Activated T-helper 2 cell treated with anti-CD3 and anti-CD28 coated beads, Interferon-gamma antibody, Interleukin-2, Interleukin-4, amounts not matched to agents 10 μg/mL and 5 μg/mL and 100 μg/mL, durations not matched to agents 14 hours and 24 hours and 36 hours (primary cell): ENCODE measurements at regions of chr16 and their contacts with region 1.

Region 1: DNA sequence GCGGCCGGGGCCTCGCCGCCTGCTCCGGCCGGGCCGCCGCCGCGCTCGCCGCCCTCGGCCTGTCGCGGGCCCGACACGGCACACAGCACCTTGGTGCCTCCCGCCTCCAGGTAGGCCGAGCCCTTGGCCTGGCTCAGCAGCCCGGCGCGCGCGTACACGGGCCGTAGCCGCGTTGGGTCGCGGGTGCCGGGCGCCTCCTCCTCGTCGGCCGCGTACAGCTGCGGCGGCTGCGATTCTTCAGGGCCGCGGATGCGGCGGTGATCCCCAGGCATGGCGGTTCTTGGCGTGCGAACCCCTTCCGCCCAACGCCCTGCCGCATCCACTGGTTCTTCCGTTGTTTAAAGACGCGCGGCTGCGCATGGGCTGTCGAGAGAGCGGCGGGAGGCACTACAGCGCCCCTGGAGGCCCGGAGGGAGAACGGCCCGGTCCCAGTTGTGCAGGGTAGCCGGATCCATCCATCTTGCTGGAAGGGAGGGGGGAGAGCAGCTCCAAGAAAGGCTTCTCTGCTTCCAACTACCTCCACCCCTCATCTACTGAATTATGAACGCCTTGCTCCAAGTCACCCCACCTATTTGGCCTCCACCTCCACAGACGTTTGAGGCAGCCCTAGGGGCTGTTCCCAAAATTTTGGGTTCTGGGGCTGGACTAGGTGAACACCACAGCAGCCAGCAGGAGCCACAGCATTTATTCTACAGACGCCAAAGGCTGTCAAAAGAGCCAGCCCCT is at the start of gene EXOSC6:
- DNase-seq: peak; percentile 92
- H3K4me3 Mint-ChIP-seq: peak within 1 kb of the TSS; percentile 87
- H3K27ac Mint-ChIP-seq: peak within 1 kb of the TSS; percentile 95
- H3K4me1 Mint-ChIP-seq: peaks cover 11% of the 10 kb centered on the region
- H3K27me3 Mint-ChIP-seq: no peaks in the 10 kb centered on the region
- total RNA-seq, gene EXOSC6: 32.0 and 32.6 TPM in 2 replicates

Region 2: DNA sequence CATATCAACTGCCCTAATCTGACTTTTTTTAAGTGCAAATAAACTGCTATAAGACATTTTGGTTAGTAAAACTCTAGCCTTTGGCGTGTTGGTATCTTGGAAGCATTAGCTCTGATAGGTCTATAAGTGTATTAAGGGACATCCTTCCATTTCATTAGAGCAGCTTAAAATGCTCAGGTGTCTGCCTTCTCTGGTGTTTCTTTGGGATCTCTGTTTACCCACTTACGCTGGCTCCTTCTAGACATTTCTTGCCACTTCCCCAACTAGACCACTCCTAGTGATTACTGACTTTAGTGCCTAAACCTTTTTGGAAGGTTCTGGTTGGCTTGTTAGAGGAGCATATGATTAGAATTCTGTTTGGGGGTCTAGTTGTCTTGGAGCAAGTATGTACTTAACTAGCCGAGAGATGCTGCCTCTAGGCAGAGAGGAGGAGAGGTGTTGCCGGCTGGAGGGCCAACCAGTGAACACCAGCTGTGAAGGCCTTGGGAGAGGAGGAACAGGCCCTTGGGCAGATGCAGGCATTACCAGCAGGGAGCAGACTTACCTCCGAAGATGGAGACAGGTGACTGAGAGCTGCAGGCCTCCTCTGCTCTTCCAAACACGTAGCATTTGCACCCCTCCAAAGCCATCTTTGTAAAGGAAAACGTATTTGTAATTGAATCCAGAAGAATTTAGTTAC is 93.4 kb before region 1 on chr16:
- intact Hi-C with region 1: no loop called
- DNase-seq: no peak
- H3K4me3 Mint-ChIP-seq: no peak overlapping the region
- H3K27ac Mint-ChIP-seq: no peak overlapping the region
- H3K4me1 Mint-ChIP-seq: no peaks in the 10 kb centered on the region
- H3K27me3 Mint-ChIP-seq: no peaks in the 10 kb centered on the region

Region 3: DNA sequence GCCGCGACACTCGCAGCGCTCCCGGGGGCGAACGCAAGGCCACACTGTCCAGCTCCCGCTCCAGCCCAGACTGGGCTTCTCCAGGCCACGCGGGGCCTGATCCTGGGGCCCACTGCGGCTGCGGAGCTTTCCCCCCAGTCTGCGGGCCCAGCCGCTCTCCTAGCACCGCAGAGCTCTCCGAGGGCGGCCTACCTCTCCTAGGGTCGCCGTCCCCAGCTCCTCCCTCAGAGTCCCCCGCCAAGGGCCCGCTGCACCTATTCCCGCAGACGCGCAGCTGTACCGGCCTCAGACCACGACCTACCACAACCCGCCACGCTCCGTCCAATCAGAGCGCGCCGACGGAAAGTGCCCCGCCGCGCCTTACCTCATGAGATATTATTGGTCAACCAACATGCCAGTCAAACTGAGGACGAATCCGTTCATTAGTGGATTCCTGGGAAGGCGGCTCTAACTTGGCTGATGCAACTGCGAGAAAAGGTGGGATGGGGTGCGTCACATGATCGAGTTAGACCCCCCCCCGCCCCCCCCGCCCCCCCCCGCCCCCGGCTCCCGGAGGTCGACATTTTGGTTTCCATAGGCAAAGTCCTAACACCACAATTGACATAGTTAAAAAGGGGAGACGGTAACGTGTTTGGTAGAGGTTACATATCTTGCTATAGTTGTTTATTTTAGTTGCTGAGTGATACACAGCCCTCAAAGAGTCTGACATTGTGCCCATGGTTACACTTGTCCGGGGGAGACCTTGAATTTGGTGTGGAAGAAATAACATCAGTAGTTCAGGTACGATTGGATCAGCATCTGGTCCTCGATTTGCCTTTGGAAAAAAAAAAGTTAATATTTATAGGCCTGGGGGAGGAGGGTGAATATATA is 37.7 kb after region 1 on chr16 and contains the start of gene AARS1:
- intact Hi-C with region 1: loop called (anchors 1 kb)
- DNase-seq: peak; percentile 96
- H3K4me3 Mint-ChIP-seq: peak within 1 kb of the TSS; percentile 97
- H3K27ac Mint-ChIP-seq: peak within 1 kb of the TSS; percentile 98
- H3K4me1 Mint-ChIP-seq: peaks cover 19% of the 10 kb centered on the region
- H3K27me3 Mint-ChIP-seq: no peaks in the 10 kb centered on the region
- total RNA-seq, gene AARS1: 103 and 106 TPM in 2 replicates